Endothelial cell of umbilical vein (primary cell): ENCODE measurements at regions of chr6 and their contacts with region 1.

Region 1: DNA sequence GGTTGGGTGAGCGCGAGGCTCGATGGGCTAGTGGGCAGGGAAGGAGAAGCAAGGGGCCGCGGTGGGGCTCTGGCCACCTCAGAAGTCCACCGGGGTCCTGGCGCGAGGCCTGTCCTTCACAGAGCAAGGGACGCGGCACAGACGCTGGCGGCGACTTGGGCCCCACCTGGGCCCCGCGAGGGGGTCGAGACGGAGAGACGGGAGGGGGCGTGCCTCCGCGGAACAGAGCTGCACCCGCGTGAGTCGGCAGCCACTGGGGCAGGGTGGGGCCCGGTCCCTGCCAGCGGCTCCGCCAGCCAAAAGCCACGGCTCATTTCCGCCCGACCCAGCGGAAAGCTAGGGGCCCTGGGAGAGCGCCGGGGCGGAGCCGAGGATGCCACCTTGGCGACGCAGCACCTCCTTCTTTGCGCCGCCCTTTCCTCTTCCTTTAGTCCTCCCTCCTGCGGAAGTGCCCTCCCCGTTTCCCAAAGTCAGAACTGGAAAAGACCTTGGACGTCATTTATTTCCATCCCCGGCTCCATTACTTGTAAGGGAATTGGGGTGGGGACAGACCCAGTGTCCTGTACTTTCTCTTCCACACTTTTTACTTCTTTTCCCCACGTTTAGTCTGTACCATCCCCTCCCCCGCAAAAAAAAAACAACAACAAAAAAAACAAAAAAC is at the start of gene CUL7:
- DNase-seq: peak; percentile 95
- H3K4me3 ChIP-seq: peak within 1 kb of the TSS; percentile 30 to 64 (median 40)
- H3K27ac ChIP-seq: peak within 1 kb of the TSS; percentile 82
- H3K4me1 ChIP-seq: peaks cover 16% of the 10 kb centered on the region
- H3K27me3 ChIP-seq: no peaks in the 10 kb centered on the region
- CTCF ChIP-seq: no peak
- POLR2A ChIP-seq: peak; percentile 99
- total RNA-seq, gene CUL7: 29.4 and 29.7 TPM in 2 replicates

Region 2: DNA sequence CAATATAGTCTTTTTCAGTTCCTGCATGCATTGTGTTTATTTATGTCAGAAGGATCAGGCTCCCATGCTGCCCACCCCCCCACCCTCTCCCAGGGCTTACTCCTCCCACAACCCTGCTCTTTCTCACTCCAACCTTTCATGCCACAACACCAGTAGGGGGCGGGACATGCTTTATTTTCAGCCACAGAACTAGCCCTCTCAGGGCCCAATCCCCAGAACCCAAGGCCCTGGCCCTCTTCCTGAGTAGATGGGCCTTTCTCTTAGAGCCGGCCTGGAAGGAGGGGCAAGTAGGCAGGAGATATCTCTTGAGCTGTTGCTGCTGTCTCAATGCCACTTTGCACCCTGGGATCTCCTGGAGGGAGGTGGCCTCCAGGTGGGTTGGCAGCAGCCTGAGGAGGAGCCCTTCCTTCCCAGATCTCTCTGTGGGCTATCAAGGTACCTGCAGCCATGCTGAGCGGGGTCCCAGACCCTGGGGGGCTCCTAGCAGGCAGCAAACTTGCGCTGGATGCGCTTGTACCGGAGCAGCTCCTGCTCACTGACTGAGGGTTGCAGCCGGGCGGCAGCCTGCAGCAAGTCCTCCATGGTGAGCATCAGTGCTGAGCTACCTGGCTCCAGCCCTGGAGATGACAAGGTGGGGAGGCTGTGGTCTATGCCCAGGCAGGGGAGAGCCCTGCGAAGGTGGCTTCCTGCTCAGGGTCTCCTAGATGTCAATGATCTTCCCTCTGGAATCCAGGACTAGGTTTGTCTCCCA is 89.6 kb before region 1 on chr6:
- CTCF ChIA-PET with region 1: no interaction called
- POLR2A ChIA-PET with region 1: no interaction called
- dilution Hi-C with region 1: no loop called
- intact Hi-C with region 1: no loop called
- DNase-seq: peak; percentile 50
- H3K4me3 ChIP-seq: no peak overlapping the region
- H3K27ac ChIP-seq: no peak overlapping the region
- H3K4me1 ChIP-seq: peaks cover 10% of the 10 kb centered on the region
- H3K27me3 ChIP-seq: no peaks in the 10 kb centered on the region
- CTCF ChIP-seq: peak; percentile 8 to 31
- POLR2A ChIP-seq: no peak

Region 3: DNA sequence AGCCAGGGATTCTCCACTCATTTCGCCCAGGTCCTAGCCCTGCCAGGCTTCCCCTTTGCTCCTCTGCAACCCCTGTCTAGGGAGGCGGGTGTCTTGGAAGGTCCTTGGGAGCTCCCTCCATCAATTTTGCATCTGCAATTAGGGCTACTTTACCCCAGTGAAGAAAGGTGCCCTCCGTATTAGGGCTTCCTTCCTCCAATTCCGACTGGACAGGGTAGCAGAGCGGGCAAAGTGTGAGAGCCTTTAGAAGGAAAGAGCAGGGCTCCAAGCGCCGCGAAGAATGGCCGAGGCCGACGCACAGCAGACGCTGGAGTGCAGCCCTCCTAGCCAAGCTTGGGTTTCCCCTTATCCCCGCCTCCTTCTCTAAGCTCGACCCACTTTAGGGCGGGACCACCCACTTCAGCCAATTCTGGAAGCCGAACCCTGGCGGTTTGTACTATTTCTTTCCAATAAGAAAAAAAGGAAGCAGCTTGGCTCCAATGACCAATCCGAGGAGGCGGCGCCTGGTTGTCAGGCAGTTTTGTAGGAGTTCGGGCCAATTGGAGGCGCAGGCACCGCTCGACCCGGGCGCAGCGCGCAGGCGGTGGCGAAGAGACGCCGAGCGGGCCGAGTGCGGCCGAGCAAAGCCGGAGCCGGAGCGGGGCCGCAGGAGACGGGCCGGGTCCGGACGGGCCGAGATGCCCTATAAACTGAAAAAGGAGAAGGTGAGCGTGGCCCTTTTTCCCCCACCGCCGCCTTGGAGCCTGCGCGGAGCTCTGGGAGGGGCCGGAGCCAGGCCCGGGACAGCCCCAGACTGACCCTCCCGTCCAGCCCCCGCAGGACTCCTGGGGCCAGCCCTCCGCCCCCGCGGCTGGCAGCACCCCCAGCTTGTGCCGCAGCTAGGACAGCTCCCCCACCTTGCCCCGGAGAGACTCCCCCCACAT is 69.4 kb before region 1 on chr6 and contains the start of gene PPP2R5D:
- CTCF ChIA-PET with region 1: interaction called, 5 read pairs
- POLR2A ChIA-PET with region 1: interaction called, 3 read pairs
- dilution Hi-C with region 1: no loop called
- intact Hi-C with region 1: loop called (anchors 2 kb)
- DNase-seq: peak; percentile 99
- H3K4me3 ChIP-seq: peak within 1 kb of the TSS; percentile 57 to 90 (median 83)
- H3K27ac ChIP-seq: no peak within 1 kb of the TSS
- H3K4me1 ChIP-seq: peaks cover 35% of the 10 kb centered on the region
- H3K27me3 ChIP-seq: no peaks in the 10 kb centered on the region
- CTCF ChIP-seq: no peak
- POLR2A ChIP-seq: peak; percentile 66
- total RNA-seq, gene PPP2R5D: 45.5 and 51.0 TPM in 2 replicates

Region 4: GRCh38 chr6:43070028-43070632 is 16.5 kb after region 1 on chr6:
- CTCF ChIA-PET with region 1: no interaction called
- POLR2A ChIA-PET with region 1: no interaction called
- dilution Hi-C with region 1: no loop called
- intact Hi-C with region 1: no loop called
- DNase-seq: peak; percentile 37
- H3K4me3 ChIP-seq: no peak overlapping the region
- H3K27ac ChIP-seq: no peak overlapping the region
- H3K4me1 ChIP-seq: no peaks in the 10 kb centered on the region
- H3K27me3 ChIP-seq: no peaks in the 10 kb centered on the region
- CTCF ChIP-seq: peak; percentile 48 to 49
- POLR2A ChIP-seq: no peak